Activated CD4-positive, alpha-beta T cell treated with anti-CD3 and anti-CD28 coated beads for 36 hours (primary cell): ENCODE measurements at regions of chr20 and their contacts with region 1.

Region 1: GRCh38 chr20:18507218-18508021 is at the start of gene SEC23B:
- DNase-seq: peak; percentile 99
- ATAC-seq: peak; percentile 94
- H3K4me3 Mint-ChIP-seq: peak within 1 kb of the TSS; percentile 99
- H3K27ac Mint-ChIP-seq: peak within 1 kb of the TSS; percentile 100
- H3K4me1 Mint-ChIP-seq: peaks cover 48% of the 10 kb centered on the region
- H3K27me3 Mint-ChIP-seq: no peaks in the 10 kb centered on the region
- total RNA-seq, gene SEC23B: 95.3 to 119 TPM

Region 2: GRCh38 chr20:18466894-18467730 is 40.3 kb before region 1 on chr20 and contains the starts of genes DZANK1 and POLR3F:
- CTCF ChIA-PET with region 1: interaction called, 7 read pairs
- POLR2A ChIA-PET with region 1: interaction called, 21 read pairs
- intact Hi-C with region 1: loop called (anchors 1 kb)
- DNase-seq: peak; percentile 96
- ATAC-seq: peak; percentile 99
- H3K4me3 Mint-ChIP-seq: peak within 1 kb of the TSS; percentile 91
- H3K27ac Mint-ChIP-seq: peak within 1 kb of the TSS; percentile 89
- H3K4me1 Mint-ChIP-seq: peaks cover 21% of the 10 kb centered on the region
- H3K27me3 Mint-ChIP-seq: no peaks in the 10 kb centered on the region
- total RNA-seq, gene DZANK1: 1.4 to 2.0 TPM
- total RNA-seq, gene POLR3F: 9.8 to 11.8 TPM

Region 3: DNA sequence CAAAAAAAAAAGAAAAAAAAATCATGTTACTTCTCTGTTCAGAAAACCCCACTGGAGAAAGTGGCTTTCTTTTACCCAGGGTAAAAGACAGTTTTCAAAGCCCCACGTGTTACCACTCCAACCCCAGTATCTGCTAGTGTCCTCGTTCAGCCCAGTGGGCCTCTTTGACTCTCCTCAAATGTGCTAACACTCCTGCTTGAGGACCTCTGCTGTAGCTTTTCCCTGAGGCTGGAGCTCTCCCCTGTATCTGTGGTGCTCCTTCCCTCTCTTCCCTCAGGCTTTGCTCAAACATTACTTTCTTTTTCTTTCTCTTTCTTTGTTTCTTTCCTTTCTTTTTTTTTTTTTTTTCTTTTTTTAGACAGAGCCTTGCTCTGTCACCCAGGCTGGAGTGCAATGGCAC is 15.6 kb after region 1 on chr20:
- CTCF ChIA-PET with region 1: no interaction called
- POLR2A ChIA-PET with region 1: no interaction called
- intact Hi-C with region 1: no loop called
- DNase-seq: no peak
- ATAC-seq: no peak
- H3K4me3 Mint-ChIP-seq: no peak overlapping the region
- H3K27ac Mint-ChIP-seq: no peak overlapping the region
- H3K4me1 Mint-ChIP-seq: no peaks in the 10 kb centered on the region
- H3K27me3 Mint-ChIP-seq: no peaks in the 10 kb centered on the region

Region 4: GRCh38 chr20:18566892-18567742 is 59.7 kb after region 1 on chr20 and contains the start of gene SMIM26:
- CTCF ChIA-PET with region 1: interaction called, 7 read pairs
- POLR2A ChIA-PET with region 1: interaction called, 3 read pairs
- intact Hi-C with region 1: loop called (anchors 1 kb)
- DNase-seq: peak; percentile 97
- ATAC-seq: peak; percentile 100
- H3K4me3 Mint-ChIP-seq: peak within 1 kb of the TSS; percentile 98
- H3K27ac Mint-ChIP-seq: peak within 1 kb of the TSS; percentile 92
- H3K4me1 Mint-ChIP-seq: peaks cover 13% of the 10 kb centered on the region
- H3K27me3 Mint-ChIP-seq: no peaks in the 10 kb centered on the region
- total RNA-seq, gene SMIM26: 64.4 to 66.2 TPM

Region 5: GRCh38 chr20:18793625-18794427 is 286.4 kb after region 1 on chr20:
- CTCF ChIA-PET with region 1: no interaction called
- POLR2A ChIA-PET with region 1: no interaction called
- intact Hi-C with region 1: loop called in 1 of 2 experiments (anchors 1 kb)
- DNase-seq: peak; percentile 92
- ATAC-seq: peak; percentile 98
- H3K4me3 Mint-ChIP-seq: peak overlapping the region; percentile 87
- H3K27ac Mint-ChIP-seq: peak overlapping the region; percentile 96
- H3K4me1 Mint-ChIP-seq: peaks cover 17% of the 10 kb centered on the region
- H3K27me3 Mint-ChIP-seq: peaks cover 7% of the 10 kb centered on the region

Region 6: DNA sequence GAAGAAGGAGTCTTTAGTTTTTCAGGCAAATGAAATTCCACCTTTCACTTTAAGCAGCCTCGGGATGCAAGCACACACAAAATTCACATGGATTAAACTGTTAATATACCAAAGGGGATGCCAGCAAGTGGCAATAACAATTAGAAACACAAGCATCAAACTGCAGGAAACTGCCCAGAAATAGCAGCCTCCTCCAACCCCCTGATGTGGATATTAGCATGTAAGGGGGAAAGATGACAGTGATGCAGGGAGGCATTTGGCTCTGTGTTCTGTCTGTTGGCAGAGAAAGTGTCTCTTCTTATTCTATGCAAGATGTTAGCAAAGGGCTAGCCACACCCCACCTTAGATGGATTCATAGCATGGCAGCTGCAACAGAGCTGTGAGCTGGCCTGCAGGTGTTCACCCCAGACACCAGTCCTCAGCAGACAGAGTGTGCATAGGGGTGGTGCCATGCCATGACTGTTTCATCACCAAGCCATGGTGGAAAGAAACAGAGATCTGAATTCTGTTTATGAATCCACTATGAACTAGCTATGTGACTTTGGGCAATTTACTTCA is 344.2 kb after region 1 on chr20:
- CTCF ChIA-PET with region 1: no interaction called
- POLR2A ChIA-PET with region 1: no interaction called
- intact Hi-C with region 1: no loop called
- DNase-seq: no peak
- ATAC-seq: no peak
- H3K4me3 Mint-ChIP-seq: no peak overlapping the region
- H3K27ac Mint-ChIP-seq: no peak overlapping the region
- H3K4me1 Mint-ChIP-seq: no peaks in the 10 kb centered on the region
- H3K27me3 Mint-ChIP-seq: no peaks in the 10 kb centered on the region